Uterus (tissue), 4 donors: ENCODE measurements at regions of chr14 and their contacts with region 1.

Region 1: DNA sequence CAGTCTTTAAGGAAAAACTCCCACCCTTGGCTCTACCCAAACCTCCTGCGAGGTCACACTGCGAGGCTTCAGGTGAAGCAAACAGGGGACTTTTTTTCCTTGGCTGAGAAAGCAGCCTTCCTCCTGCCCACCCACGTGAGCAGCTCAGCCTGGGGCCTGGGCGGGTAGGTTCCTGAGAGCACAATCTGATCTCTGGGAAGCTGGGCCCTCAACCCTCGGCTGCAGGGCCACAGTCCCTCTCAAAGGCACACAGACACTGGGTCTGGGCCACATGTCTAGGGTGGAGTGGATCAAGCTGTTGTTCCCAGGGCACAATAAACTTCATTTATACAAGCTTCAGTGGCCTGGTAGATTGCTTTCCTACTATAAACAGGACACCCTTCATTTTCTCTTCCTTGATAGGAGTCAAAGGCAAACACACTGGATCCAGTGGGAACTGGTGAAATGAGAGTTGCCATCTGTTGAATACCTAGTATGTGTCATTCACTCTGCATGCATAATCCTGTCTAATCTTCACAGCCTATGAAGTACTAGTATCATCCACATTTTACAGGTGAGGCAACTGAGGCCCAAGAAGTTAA is 41.3 kb upstream of the PNMA1 start:
- DNase-seq: no peak
- H3K4me3 ChIP-seq: peak overlapping the region in 1 of 2 donors; percentile 14
- H3K27ac ChIP-seq: peak overlapping the region; percentile 95 to 97
- H3K4me1 ChIP-seq: peaks cover 31 to 69% of the 10 kb centered on the region in 2 donors
- H3K27me3 ChIP-seq: no peaks in the 10 kb centered on the region
- CTCF ChIP-seq: no peak
- POLR2A ChIP-seq: no peak

Region 2: GRCh38 chr14:73789691-73790581 is 34.4 kb after region 1 on chr14:
- intact Hi-C with region 1: loop called (anchors 2 kb)
- DNase-seq: peak; percentile 80 to 89
- H3K4me3 ChIP-seq: no peak overlapping the region
- H3K27ac ChIP-seq: peak overlapping the region; percentile 98 to 100
- H3K4me1 ChIP-seq: peaks cover 10 to 23% of the 10 kb centered on the region in 2 donors
- H3K27me3 ChIP-seq: no peaks in the 10 kb centered on the region
- CTCF ChIP-seq: no peak
- POLR2A ChIP-seq: peak; percentile 56 to 75